ENCODE measurements at regions of chrX and their contacts with region 1.

Region 1: DNA sequence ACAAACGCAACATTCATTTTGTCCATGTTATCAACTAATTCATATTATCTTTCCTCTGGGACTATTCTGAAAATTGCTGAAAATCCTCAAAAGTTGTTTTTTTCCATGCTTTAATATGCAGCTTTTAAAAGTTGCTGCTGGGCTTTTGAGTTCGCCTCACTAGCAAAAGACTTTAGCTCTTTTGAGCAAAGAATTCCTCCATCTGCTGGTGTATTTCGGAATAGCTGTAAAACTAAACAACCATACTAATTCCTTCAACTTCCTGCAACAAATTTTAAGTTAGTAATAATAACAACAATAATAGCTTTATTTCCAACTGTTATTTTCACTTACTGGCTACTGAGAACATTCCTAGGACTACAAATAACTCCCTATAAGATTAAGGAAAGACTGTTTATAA is 124.5 kb upstream of the PLAC1 start:
- DNase-seq: no peak
- ATAC-seq: no peak
- H3K4me3 ChIP-seq: no peak overlapping the region
- H3K27ac ChIP-seq: no peak overlapping the region
- H3K4me1 ChIP-seq: no peaks in the 10 kb centered on the region
- H3K27me3 ChIP-seq: no peaks in the 10 kb centered on the region

Region 2: DNA sequence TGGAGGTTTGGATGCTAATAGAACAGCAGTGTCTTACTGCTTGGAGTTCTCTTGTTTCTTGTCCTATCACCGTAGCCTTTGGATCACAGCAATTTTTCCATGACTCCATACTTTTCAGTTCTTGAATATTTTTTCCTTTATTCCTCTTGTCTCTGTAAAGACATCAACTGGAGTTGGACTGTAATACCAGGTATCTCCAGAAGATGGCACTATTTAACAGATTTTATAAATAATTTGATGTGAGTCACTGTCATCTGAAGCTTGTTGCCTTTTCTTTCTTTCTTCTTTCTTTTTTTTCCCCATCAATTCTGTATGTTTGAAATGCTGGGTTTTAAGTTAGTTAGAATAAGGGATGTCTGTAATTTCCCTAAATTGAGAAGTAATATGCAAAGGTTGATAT is 298.8 kb before region 1 on chrX:
- intact Hi-C with region 1: loop called (anchors 10 kb)
- DNase-seq: no peak
- ATAC-seq: no peak
- H3K4me3 ChIP-seq: no peak overlapping the region
- H3K27ac ChIP-seq: no peak overlapping the region
- H3K4me1 ChIP-seq: no peaks in the 10 kb centered on the region
- H3K27me3 ChIP-seq: no peaks in the 10 kb centered on the region

Region 3: DNA sequence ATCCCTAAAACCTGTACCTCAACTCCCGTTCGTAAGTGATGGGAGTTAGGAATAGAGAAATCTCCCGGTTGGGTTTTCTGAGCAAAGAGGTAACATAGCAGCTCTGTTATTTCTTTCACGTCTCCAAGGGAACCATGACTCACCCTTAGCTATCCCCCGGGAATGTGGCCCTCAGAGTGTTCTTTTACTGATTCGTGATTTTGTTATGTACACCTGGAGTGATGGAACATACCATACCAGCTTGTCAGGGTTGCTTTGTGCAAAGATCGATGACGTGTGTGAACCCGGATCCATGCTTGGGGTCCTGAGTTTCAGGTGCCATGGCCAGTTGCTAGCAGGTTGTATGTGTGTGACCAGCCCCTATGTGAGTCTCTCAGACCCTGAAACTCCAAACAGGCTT is 270.2 kb before region 1 on chrX:
- intact Hi-C with region 1: loop called in 1 of 2 experiments (anchors 10 kb)
- DNase-seq: no peak
- ATAC-seq: no peak
- H3K4me3 ChIP-seq: no peak overlapping the region
- H3K27ac ChIP-seq: no peak overlapping the region
- H3K4me1 ChIP-seq: no peaks in the 10 kb centered on the region
- H3K27me3 ChIP-seq: no peaks in the 10 kb centered on the region